ENCODE measurements at regions of chr5 and their contacts with region 1.

Region 1: GRCh38 chr5:10987930-10988504 is 227.0 kb upstream of the DAP start:
- DNase-seq: peak; percentile 69 to 98
- H3K4me3 ChIP-seq: peak overlapping the region in 1 of 4 experiments; percentile 20; a peak in 2 of 8 replicates
- H3K27ac ChIP-seq: no peak overlapping the region
- H3K4me1 ChIP-seq: peaks cover 0 to 7% (median 0%) of the 10 kb centered on the region in 4 experiments; a peak in 3 of 7 replicates
- H3K27me3 ChIP-seq: no peaks in the 10 kb centered on the region
- CTCF ChIP-seq: peak; percentile 95 to 96 (median 96)
- EP300 ChIP-seq: no peak
- POLR2A ChIP-seq: no peak
- RAD21 ChIP-seq: peak; percentile 88 to 95

Region 2: GRCh38 chr5:10856683-10857337 is 131.2 kb before region 1 on chr5:
- CTCF ChIA-PET with region 1: interaction called, 12 read pairs
- POLR2A ChIA-PET with region 1: no interaction called
- DNase-seq: peak; percentile 70 to 92
- H3K4me3 ChIP-seq: peak overlapping the region in 3 of 4 experiments; percentile 2 to 48 (median 20); a peak in 4 of 8 replicates
- H3K27ac ChIP-seq: no peak overlapping the region
- H3K4me1 ChIP-seq: peaks cover 4 to 16% (median 14%) of the 10 kb centered on the region in 4 experiments
- H3K27me3 ChIP-seq: peaks cover 0 to 10% (median 6%) of the 10 kb centered on the region in 4 experiments; a peak in 3 of 7 replicates
- CTCF ChIP-seq: peak; percentile 76 to 91 (median 86)
- EP300 ChIP-seq: 0 out of 3 replicates have a peak, but pooled peaks of 1 of the 2 experiments have one; percentile 55
- POLR2A ChIP-seq: no peak
- RAD21 ChIP-seq: peak; percentile 50 to 60; a peak in 3 of 4 replicates

Region 3: GRCh38 chr5:10969684-10970180 is 18.3 kb before region 1 on chr5:
- CTCF ChIA-PET with region 1: interaction called, 35 read pairs
- POLR2A ChIA-PET with region 1: no interaction called
- DNase-seq: no peak
- H3K4me3 ChIP-seq: no peak overlapping the region
- H3K27ac ChIP-seq: no peak overlapping the region
- H3K4me1 ChIP-seq: peaks cover 0 to 5% (median 0%) of the 10 kb centered on the region in 4 experiments; a peak in 1 of 7 replicates
- H3K27me3 ChIP-seq: no peaks in the 10 kb centered on the region
- CTCF ChIP-seq: no peak
- EP300 ChIP-seq: no peak
- POLR2A ChIP-seq: no peak
- RAD21 ChIP-seq: no peak

Region 4: GRCh38 chr5:10975945-10976344 is 12.1 kb before region 1 on chr5:
- CTCF ChIA-PET with region 1: interaction called, 35 read pairs
- POLR2A ChIA-PET with region 1: interaction called, 4 read pairs
- DNase-seq: no peak
- H3K4me3 ChIP-seq: no peak overlapping the region
- H3K27ac ChIP-seq: no peak overlapping the region
- H3K4me1 ChIP-seq: no peaks in the 10 kb centered on the region
- H3K27me3 ChIP-seq: no peaks in the 10 kb centered on the region
- CTCF ChIP-seq: no peak
- EP300 ChIP-seq: no peak
- POLR2A ChIP-seq: no peak
- RAD21 ChIP-seq: no peak

Region 5: DNA sequence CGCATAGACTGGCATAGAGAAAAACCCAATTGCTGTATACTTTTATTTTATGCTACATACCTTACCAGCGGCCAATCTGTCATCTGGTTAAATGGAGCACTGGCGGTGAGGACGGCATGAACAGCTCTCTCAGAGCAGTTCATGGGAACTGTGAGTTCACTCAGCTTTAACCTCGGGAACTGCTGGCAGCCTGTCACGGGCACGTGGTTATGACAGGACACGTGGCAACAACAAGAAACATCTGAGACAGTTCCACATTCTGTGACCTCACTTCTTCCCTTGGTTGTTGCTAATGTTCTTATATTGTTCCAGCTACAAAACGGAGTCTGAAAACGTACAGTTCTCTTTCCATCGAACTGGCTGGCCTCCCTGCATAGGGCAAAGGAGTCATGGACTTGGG is 19.3 kb after region 1 on chr5:
- CTCF ChIA-PET with region 1: interaction called, 25 read pairs
- POLR2A ChIA-PET with region 1: no interaction called
- DNase-seq: no peak
- H3K4me3 ChIP-seq: no peak overlapping the region
- H3K27ac ChIP-seq: no peak overlapping the region
- H3K4me1 ChIP-seq: no peaks in the 10 kb centered on the region
- H3K27me3 ChIP-seq: no peaks in the 10 kb centered on the region
- CTCF ChIP-seq: no peak
- EP300 ChIP-seq: no peak
- POLR2A ChIP-seq: no peak
- RAD21 ChIP-seq: no peak

Region 6: GRCh38 chr5:11046160-11046559 is 58.1 kb after region 1 on chr5:
- CTCF ChIA-PET with region 1: interaction called, 17 read pairs
- POLR2A ChIA-PET with region 1: no interaction called
- DNase-seq: peak in 1 of 2 experiments; percentile 50
- H3K4me3 ChIP-seq: no peak overlapping the region
- H3K27ac ChIP-seq: no peak overlapping the region
- H3K4me1 ChIP-seq: peaks cover 0 to 3% (median 0%) of the 10 kb centered on the region in 4 experiments; a peak in 1 of 7 replicates
- H3K27me3 ChIP-seq: no peaks in the 10 kb centered on the region
- CTCF ChIP-seq: peak; percentile 27 to 52 (median 48)
- EP300 ChIP-seq: no peak
- POLR2A ChIP-seq: no peak
- RAD21 ChIP-seq: peak; percentile 59 to 64; a peak in 3 of 4 replicates

Region 7: DNA sequence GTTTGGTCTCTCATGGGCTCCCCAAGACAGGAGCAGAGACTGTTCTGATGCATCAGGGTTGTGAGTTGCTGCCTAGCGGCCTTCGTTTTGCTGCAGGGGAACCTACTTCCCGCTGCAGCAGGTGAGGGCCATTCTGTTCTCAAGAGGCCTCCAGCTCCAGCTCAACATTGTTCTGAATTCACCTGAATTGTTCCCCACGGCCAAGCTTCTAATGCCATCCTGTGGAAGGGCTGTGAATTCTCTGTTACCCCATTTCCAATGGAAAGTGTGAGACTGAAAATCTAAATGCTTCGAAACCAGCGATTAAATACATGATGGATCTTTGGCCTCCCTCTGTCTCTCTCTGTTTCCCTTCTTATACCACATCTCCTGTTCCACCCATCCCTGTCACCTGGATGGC is 122.1 kb after region 1 on chr5:
- CTCF ChIA-PET with region 1: interaction called, 10 read pairs
- POLR2A ChIA-PET with region 1: no interaction called
- DNase-seq: no peak
- H3K4me3 ChIP-seq: no peak overlapping the region
- H3K27ac ChIP-seq: no peak overlapping the region
- H3K4me1 ChIP-seq: 0 out of 7 replicates have a peak, but pooled peaks cover 0 to 2% (median 0%) of the 10 kb centered on the region in 4 experiments
- H3K27me3 ChIP-seq: no peaks in the 10 kb centered on the region
- CTCF ChIP-seq: peak in 2 of 3 experiments; percentile 21 to 27; a peak in 1 of 4 replicates
- EP300 ChIP-seq: no peak
- POLR2A ChIP-seq: no peak
- RAD21 ChIP-seq: peak; percentile 55 to 65

Measured in H1 (cell line).